Head of caudate nucleus (tissue), 42 donors: ENCODE measurements at regions of chr2 and their contacts with region 1.

Region 1: DNA sequence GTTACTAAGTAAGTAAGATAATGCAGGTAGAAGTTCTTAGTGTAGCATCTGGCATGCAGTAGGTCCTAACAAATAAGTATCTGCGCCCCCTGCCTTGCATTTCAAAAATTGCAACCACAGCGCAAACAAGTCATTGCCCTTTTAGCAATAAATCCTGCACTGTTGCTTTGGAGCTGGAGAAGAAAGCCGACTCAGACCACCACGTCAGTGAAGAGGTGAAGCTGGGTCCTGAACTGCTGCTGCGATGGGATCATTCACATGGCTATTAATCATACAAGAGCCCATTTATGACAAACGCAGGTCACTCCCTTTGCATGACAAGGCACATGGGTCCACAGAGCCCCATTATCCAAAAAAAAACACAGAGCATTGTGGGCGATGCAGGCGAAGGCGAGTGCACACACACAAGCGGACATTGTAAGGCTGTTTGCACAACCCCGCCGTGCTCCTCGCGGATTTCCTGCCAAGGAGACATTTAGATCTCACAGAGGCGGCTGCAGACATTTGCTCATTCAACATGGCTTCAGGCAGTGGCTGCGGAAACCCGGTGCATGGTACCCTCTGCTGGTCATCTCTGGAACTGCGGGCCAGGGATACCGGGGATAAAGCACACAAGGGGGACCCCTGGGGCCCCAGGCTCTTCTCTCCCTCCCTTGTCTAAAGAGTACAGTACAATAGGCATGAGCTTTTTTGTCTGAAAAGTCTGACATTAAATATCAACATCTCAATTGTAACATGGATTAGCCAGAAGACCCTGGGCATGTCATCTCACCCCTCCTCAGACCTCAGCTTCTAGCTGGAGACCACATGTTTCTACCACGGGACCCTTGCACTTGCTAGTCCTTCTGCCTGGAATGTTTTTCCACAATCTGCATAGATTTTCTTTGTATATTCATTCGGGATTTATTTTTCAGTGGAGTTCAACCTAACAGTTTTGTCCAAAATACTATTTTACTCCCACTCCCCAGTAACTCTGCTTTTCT is 56.7 kb downstream of the CYRIA start:
- DNase-seq: peak; percentile 77 to 97 (median 92)

Region 2: DNA sequence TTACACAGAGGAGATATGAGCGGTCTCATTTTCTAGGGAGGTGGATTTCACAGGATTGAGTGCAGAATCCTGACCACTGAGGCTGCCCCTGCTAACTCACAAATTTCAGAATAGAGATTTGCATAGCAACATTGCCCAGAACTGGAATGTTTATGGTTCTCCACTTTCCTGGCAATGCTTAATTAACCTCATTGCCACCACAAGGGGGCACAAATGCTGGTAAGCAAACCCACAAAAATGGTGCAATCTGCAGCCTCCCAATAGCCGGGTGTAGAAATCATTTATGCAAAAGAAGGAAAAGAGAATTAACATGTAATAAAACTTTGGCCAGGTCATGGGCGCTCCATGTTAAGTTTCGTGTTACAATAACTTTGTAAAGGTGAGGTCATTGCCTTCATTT is 55.7 kb before region 1 on chr2:
- intact Hi-C with region 1: loop called (anchors 5 kb)
- DNase-seq: peak in 39 of 42 donors; percentile 13 to 86 (median 53)

Region 3: DNA sequence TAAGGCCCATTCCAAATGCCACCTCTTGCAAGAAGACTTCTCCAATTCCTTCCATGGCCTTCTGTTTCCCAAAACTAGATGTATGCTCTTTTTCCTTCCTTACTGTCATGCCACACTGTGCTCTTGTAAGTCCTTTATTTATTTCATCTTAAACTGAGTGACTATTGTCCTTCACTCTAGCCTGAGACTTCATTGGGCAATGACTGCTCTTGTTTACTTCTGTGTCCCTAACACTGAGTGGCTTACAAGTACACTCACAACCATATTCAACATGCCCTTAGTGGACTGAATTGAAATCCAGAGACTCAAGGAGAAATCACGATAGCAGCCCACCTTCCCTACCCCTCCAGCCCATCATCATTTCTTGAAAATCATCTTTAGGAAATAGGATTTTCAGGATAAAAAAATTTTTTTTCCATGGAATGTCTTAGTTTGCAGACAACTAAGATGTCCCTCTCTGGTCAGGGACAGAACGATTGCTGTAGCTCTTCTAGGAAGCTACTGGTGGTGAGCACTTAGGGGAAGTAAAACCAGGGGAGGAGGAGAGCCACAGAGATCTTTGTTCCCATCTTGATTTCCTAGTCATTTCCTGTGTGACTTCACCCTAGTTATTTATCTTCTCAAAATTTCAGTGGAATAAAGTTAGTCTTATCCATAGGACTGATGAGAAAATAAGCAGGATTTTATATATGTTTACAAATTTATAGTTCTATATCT is 24.0 kb before region 1 on chr2:
- intact Hi-C with region 1: no loop called
- DNase-seq: no peak

Region 4: DNA sequence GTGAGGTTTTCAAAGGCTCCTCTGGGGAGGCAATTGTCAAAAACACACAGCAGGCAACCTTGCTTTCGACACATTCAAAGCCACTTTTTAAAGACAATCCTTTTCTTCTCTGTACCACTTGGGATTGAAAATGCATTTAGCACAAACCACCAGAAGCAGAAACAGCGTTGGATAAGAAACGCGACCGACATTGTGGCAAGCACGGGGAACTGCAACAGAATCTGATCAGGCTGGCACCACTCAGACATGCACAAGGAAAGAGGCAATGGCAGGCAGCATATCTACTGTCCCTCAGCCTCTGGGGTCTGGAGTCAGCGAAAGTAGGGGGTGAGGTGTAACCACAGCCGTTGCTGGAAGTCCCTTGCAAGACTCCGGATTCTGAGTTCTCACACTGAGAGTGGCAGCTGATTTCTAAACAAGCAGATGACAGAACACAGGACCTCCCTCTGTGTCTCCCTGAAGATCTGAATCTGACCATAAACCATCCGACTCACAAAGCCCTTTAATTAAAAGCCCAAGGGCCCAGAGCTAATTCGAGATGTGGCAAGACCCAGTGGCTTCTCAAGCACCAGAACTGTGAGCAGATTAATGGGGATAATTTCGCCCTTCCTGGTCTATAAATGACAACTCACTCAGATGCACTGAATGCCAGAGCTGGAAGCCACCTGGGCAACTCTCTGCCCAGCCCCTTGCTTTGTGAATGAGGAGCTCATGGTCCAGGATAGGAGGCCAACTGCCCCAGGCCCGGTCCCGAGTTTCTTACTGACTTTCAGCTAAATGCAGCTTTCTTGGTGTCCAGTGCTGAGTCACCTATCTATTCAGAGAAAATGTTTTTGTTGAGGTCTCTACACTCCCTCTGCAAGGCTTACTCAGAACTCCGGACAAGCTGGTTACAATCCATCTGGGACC is 27.1 kb after region 1 on chr2:
- intact Hi-C with region 1: no loop called
- DNase-seq: peak in 31 of 42 donors; percentile 49 to 84 (median 67)

Region 5: GRCh38 chr2:16727256-16727655 is 118.3 kb after region 1 on chr2:
- intact Hi-C with region 1: loop called (anchors 10 kb)
- DNase-seq: peak in 21 of 42 donors; percentile 14 to 76 (median 40)

Region 6: GRCh38 chr2:16756831-16757644 is 148.1 kb after region 1 on chr2:
- intact Hi-C with region 1: loop called (anchors 5 kb)
- DNase-seq: peak; percentile 51 to 95 (median 88)

Region 7: GRCh38 chr2:16821692-16822091 is 212.7 kb after region 1 on chr2:
- intact Hi-C with region 1: no loop called
- DNase-seq: peak in 22 of 42 donors; percentile 3 to 59 (median 25)